HCT116 (cell line): ENCODE measurements at regions of chr16 and their contacts with region 1.

Region 1: DNA sequence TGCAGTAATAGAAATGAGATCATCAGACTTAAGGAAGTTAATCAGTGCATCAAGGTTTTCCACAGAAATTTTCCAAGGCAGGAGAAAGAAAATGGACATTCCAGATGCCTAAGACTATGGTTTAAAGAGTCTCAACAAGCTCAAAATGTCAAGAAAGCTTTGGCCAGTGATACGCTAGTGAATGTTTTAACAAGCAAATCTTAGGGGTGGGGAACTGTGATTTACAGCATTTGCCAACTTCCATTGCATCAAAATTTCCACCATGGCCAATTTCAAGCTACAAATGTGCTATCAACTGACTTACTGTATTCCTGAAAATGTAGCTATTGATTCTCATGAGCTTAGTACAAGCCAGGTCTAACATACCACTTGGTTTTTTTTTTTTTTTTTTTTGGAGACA is 82.4 kb upstream of the CLEC3A start:
- DNase-seq: no peak
- ATAC-seq: no peak
- H3K4me3 ChIP-seq: no peak overlapping the region
- H3K27ac ChIP-seq: no peak overlapping the region
- H3K4me1 ChIP-seq: no peaks in the 10 kb centered on the region
- H3K27me3 ChIP-seq: peaks cover 5% of the 10 kb centered on the region; the same call in 1 of the 2 replicates
- CTCF ChIP-seq: no peak
- POLR2A ChIP-seq: no peak
- RAD21 ChIP-seq: no peak

Region 2: GRCh38 chr16:77912618-77913017 is 27.4 kb before region 1 on chr16:
- CTCF ChIA-PET with region 1: no interaction called
- POLR2A ChIA-PET with region 1: no interaction called
- RAD21 ChIA-PET with region 1: no interaction called
- intact Hi-C with region 1: loop called (anchors 2 kb)
- DNase-seq: no peak
- ATAC-seq: no peak
- H3K4me3 ChIP-seq: no peak overlapping the region
- H3K27ac ChIP-seq: no peak overlapping the region
- H3K4me1 ChIP-seq: no peaks in the 10 kb centered on the region
- H3K27me3 ChIP-seq: peaks cover 20% of the 10 kb centered on the region
- CTCF ChIP-seq: 0 out of 6 replicates have a peak, but pooled peaks of 1 of the 3 experiments have one; percentile 2
- POLR2A ChIP-seq: no peak
- RAD21 ChIP-seq: no peak

Region 3: GRCh38 chr16:77928096-77928495 is 11.9 kb before region 1 on chr16:
- CTCF ChIA-PET with region 1: no interaction called
- POLR2A ChIA-PET with region 1: no interaction called
- RAD21 ChIA-PET with region 1: no interaction called
- intact Hi-C with region 1: no loop called
- DNase-seq: no peak
- ATAC-seq: no peak
- H3K4me3 ChIP-seq: no peak overlapping the region
- H3K27ac ChIP-seq: no peak overlapping the region
- H3K4me1 ChIP-seq: no peaks in the 10 kb centered on the region
- H3K27me3 ChIP-seq: peaks cover 29% of the 10 kb centered on the region
- CTCF ChIP-seq: no peak
- POLR2A ChIP-seq: no peak
- RAD21 ChIP-seq: no peak